H1 (cell line): ENCODE measurements at regions of chr3 and their contacts with region 1.

Region 1: DNA sequence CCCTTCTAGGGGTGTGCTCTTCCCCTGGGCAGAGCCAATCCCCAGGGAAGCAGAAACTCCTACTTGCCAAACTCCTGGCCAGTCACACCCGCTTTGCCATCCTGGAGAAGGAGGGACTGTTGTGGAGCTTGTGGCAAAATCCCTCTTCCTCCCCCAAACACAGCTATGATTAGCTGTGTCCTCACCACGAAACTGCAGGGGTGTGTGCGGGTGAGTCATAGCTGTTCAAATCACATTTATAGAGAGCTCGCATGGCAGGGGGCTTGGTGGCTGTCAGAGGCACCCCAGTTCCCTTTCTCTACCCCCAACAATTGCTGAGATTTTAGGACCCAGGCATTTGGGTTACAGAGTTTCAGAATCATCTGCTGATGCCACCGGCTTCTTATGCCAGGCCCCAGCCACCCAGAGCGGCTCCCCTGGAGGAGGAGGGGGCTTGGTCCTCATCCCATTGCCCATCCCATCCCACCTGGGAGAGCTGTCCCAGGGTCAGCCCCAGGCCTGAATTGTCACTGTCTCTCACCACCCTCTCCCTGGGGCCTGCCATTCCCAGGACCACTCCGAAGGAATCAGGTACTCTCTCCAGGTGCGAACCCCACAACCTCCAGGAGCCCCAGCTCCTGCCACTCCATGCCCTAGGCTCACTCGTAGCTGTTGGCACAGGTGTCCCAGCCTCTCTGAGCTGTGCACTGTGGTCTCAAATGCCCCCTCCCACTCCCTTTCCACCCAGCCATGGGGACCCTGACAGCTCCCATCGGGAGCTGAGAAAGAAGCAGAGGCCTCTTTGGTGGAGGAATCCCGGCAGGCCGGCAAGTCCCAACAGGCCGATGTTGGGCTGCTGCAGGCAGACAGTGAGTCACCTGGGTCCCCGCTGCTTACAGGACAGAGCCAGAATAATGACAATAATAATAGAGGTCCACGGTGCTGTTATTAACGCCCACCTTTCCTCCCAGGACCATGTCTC is 28.9 kb upstream of the MAGEF1 start:
- DNase-seq: no peak
- H3K4me3 ChIP-seq: no peak overlapping the region
- H3K27ac ChIP-seq: no peak overlapping the region
- H3K4me1 ChIP-seq: peaks cover 0 to 3% (median 1%) of the 10 kb centered on the region in 4 experiments; a peak in 1 of 7 replicates
- H3K27me3 ChIP-seq: no peaks in the 10 kb centered on the region
- CTCF ChIP-seq: no peak
- EP300 ChIP-seq: no peak
- POLR2A ChIP-seq: no peak
- RAD21 ChIP-seq: no peak

Region 2: GRCh38 chr3:184757022-184757651 is 16.3 kb after region 1 on chr3:
- CTCF ChIA-PET with region 1: interaction called, 38 read pairs
- POLR2A ChIA-PET with region 1: interaction called, 4 read pairs
- DNase-seq: no peak
- H3K4me3 ChIP-seq: no peak overlapping the region
- H3K27ac ChIP-seq: no peak overlapping the region
- H3K4me1 ChIP-seq: peaks cover 3 to 29% (median 19%) of the 10 kb centered on the region in 4 experiments
- H3K27me3 ChIP-seq: 0 out of 7 replicates have a peak, but pooled peaks cover 0 to 3% (median 1%) of the 10 kb centered on the region in 4 experiments
- CTCF ChIP-seq: peak in 1 of 3 experiments; percentile 7; a peak in 1 of 4 replicates
- EP300 ChIP-seq: no peak
- POLR2A ChIP-seq: no peak
- RAD21 ChIP-seq: no peak